Activated CD4-positive, alpha-beta T cell treated with anti-CD3 and anti-CD28 coated beads, Interleukin-2, amount 10 ng/mL, durations not matched to agents 24 days and 14 days (primary cell): ENCODE measurements at regions of chr12 and their contacts with region 1.

Region 1: DNA sequence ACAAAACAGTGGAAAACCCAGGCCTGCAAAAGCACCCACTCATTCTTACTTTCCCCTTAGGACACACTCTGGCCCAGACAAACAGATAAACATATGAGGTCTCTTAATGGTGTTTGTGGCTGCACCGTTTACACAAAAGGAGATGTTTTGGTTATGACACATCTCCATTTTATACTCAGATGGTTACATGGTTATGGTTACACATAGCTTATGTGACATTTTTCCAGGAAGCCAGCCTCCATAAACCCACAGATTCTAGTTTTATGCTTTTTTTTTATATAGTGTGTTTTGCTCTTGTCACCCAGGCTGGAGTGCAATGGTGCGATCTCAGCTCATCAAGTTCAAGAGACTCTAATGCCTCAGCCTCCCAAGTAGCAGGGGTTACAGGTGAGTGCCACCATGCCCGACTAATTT is 3.5 kb upstream of the KLRD1 start:
- DNase-seq: peak; percentile 69
- H3K4me3 Mint-ChIP-seq: no peak overlapping the region
- H3K27ac Mint-ChIP-seq: peak overlapping the region; percentile 53
- H3K4me1 Mint-ChIP-seq: peaks cover 37% of the 10 kb centered on the region
- H3K27me3 Mint-ChIP-seq: peaks cover 26% of the 10 kb centered on the region

Region 2: DNA sequence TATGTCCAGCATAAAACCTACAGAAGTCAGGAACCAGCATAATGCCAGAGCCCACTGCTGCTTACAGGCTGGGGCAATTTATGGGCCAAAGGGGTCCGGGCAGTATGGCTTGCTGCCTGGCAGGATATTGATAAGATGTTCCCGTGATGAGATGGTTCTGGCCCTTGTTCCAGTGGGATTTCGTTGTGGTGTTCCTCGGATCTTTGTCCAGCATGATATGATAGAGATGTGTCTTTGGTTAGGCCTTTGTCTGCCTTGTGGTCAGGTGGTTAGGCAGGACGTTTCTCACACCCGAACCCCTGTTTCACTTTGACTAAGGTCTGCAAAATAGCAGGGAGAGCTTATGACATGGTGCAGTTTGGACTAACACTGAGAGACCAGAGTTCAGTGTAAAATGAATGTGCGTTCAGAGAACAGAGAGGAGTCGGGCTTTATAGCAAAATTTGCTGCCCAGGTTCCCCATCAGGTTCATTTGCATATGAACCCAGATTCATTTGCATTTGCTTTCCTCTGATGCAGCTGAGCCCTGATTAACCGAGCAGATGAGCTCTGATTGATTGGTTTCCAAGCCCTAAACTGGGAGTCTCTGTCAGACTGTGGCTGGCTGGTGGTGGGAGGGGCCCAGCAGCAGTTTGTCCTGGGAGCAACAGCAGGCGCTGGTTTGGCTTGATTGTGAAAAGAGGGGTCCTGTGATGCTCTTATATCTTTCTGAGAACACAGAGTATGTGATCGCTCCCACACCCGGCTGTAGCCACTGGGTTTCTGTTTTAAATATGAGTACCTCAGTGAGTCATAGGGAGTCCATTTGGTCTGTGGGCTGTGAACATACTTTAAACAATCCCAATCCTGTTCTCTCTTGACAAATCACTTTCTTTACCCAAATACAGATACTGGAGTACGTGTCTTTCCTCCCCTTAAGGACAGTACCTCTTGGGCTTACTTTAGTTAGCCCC is 939.7 kb before region 1 on chr12:
- intact Hi-C with region 1: loop called (anchors 10 kb)
- DNase-seq: peak; percentile 81
- H3K4me3 Mint-ChIP-seq: peak overlapping the region; percentile 66
- H3K27ac Mint-ChIP-seq: peak overlapping the region; percentile 88
- H3K4me1 Mint-ChIP-seq: peaks cover 40% of the 10 kb centered on the region
- H3K27me3 Mint-ChIP-seq: peaks cover 33% of the 10 kb centered on the region

Region 3: GRCh38 chr12:10293570-10294227 is 10.5 kb before region 1 on chr12:
- intact Hi-C with region 1: loop called (anchors 1 kb)
- DNase-seq: peak; percentile 61
- H3K4me3 Mint-ChIP-seq: no peak overlapping the region
- H3K27ac Mint-ChIP-seq: no peak overlapping the region
- H3K4me1 Mint-ChIP-seq: peaks cover 7% of the 10 kb centered on the region
- H3K27me3 Mint-ChIP-seq: peaks cover 11% of the 10 kb centered on the region

Region 4: GRCh38 chr12:10501031-10501430 is 196.9 kb after region 1 on chr12:
- intact Hi-C with region 1: loop called (anchors 5 kb)
- DNase-seq: no peak
- H3K4me3 Mint-ChIP-seq: no peak overlapping the region
- H3K27ac Mint-ChIP-seq: no peak overlapping the region
- H3K4me1 Mint-ChIP-seq: peaks cover 3% of the 10 kb centered on the region
- H3K27me3 Mint-ChIP-seq: peaks cover 19% of the 10 kb centered on the region